ENCODE measurements at regions of chr1 and their contacts with region 1.

Region 1: GRCh38 chr1:245045087-245045881 is 109.5 kb upstream of the KIF26B start:
- DNase-seq: peak; percentile 31 to 60
- H3K4me3 ChIP-seq: no peak overlapping the region
- H3K27ac ChIP-seq: no peak overlapping the region
- H3K4me1 ChIP-seq: peaks cover 9 to 31% (median 13%) of the 10 kb centered on the region in 4 donors
- H3K27me3 ChIP-seq: no peaks in the 10 kb centered on the region
- CTCF ChIP-seq: no peak
- EP300 ChIP-seq: no peak
- POLR2A ChIP-seq: no peak

Region 2: DNA sequence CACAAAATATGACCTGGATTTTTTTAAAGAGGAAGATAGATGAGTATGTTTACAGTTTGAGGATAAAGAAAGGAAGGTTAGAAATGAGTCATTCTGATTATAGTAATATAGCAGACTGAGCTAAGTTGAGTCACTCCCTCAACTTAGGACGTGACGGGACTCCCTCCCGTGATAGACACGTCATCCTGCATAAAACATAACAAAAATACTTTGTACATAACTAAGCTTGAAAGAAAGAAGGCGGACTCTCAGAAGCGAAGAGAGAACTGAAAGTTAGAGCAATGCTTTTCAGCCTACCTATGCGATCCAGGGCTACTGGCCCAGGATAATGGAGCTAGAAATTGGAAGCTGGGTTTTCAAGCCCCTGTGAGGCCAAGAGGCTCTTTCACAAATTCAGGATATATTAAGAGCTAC is 445.3 kb before region 1 on chr1:
- intact Hi-C with region 1: loop called (anchors 10 kb)
- DNase-seq: peak; percentile 37 to 84
- H3K4me3 ChIP-seq: peak overlapping the region in 1 of 4 donors; percentile 14
- H3K27ac ChIP-seq: peak overlapping the region; percentile 30 to 71 (median 36)
- H3K4me1 ChIP-seq: no peaks in the 10 kb centered on the region
- H3K27me3 ChIP-seq: peaks cover 0 to 8% (median 0%) of the 10 kb centered on the region in 3 donors
- CTCF ChIP-seq: no peak
- EP300 ChIP-seq: no peak
- POLR2A ChIP-seq: no peak

Region 3: GRCh38 chr1:244796718-244797406 is 248.4 kb before region 1 on chr1:
- intact Hi-C with region 1: loop called (anchors 10 kb)
- DNase-seq: peak; percentile 75 to 88
- H3K4me3 ChIP-seq: no peak overlapping the region
- H3K27ac ChIP-seq: no peak overlapping the region
- H3K4me1 ChIP-seq: peaks cover 0 to 8% (median 2%) of the 10 kb centered on the region in 4 donors
- H3K27me3 ChIP-seq: no peaks in the 10 kb centered on the region
- CTCF ChIP-seq: peak; percentile 6 to 94 (median 88)
- EP300 ChIP-seq: no peak
- POLR2A ChIP-seq: no peak

Measured in stomach (tissue), 19 donors.